H1 (cell line): ENCODE measurements at regions of chr17 and their contacts with region 1.

Region 1: GRCh38 chr17:79087428-79088143 is 13.0 kb downstream of the ENGASE start:
- DNase-seq: peak in 1 of 2 experiments; percentile 97
- H3K4me3 ChIP-seq: no peak overlapping the region
- H3K27ac ChIP-seq: no peak overlapping the region
- H3K4me1 ChIP-seq: no peaks in the 10 kb centered on the region
- H3K27me3 ChIP-seq: no peaks in the 10 kb centered on the region
- CTCF ChIP-seq: peak; percentile 91 to 98 (median 96)
- EP300 ChIP-seq: no peak
- POLR2A ChIP-seq: no peak
- RAD21 ChIP-seq: peak; percentile 89 to 93

Region 2: DNA sequence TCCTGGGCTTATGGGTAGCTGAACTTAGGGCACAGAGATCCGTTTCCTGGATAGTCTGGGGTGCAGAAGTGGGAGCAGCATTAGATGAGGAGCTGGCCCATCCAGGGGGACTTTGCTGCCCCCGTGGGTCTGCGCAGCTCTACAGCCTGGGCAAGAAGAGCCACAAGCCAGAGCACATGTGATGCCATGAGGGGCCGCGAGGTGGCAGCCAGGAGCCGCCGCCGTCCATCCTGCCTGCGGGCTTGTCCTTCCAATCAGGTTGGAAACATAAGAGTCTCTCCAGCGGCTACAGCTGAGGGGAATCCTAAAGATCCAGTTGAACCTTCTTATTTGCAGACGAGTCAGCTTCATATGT is 41.8 kb before region 1 on chr17:
- CTCF ChIA-PET with region 1: interaction called, 61 read pairs
- POLR2A ChIA-PET with region 1: no interaction called
- DNase-seq: peak; percentile 41 to 91
- H3K4me3 ChIP-seq: no peak overlapping the region
- H3K27ac ChIP-seq: no peak overlapping the region
- H3K4me1 ChIP-seq: no peaks in the 10 kb centered on the region
- H3K27me3 ChIP-seq: peaks cover 0 to 2% (median 0%) of the 10 kb centered on the region in 4 experiments; a peak in 4 of 7 replicates
- CTCF ChIP-seq: peak; percentile 95 to 96 (median 95)
- EP300 ChIP-seq: no peak
- POLR2A ChIP-seq: no peak
- RAD21 ChIP-seq: peak; percentile 76 to 82

Region 3: GRCh38 chr17:79074650-79075445 is 12.7 kb before region 1 on chr17 and contains the start of gene ENGASE:
- CTCF ChIA-PET with region 1: interaction called, 23 read pairs
- POLR2A ChIA-PET with region 1: interaction called, 4 read pairs
- DNase-seq: peak; percentile 75 to 91
- H3K4me3 ChIP-seq: peak within 1 kb of the TSS; percentile 41 to 85 (median 48)
- H3K27ac ChIP-seq: no peak within 1 kb of the TSS
- H3K4me1 ChIP-seq: no peaks in the 10 kb centered on the region
- H3K27me3 ChIP-seq: peaks cover 0 to 5% (median 0%) of the 10 kb centered on the region in 4 experiments; a peak in 4 of 7 replicates
- CTCF ChIP-seq: no peak
- EP300 ChIP-seq: peak in 1 of 2 experiments; percentile 26; a peak in 1 of 3 replicates
- POLR2A ChIP-seq: peak in 1 of 2 experiments; percentile 37; a peak in 1 of 3 replicates
- RAD21 ChIP-seq: no peak
- total RNA-seq, gene ENGASE: 30.6 and 36.1 TPM in 2 replicates

Region 4: GRCh38 chr17:79114458-79115301 is 27.1 kb after region 1 on chr17:
- CTCF ChIA-PET with region 1: interaction called, 26 read pairs
- POLR2A ChIA-PET with region 1: interaction called, 3 read pairs
- DNase-seq: no peak
- H3K4me3 ChIP-seq: no peak overlapping the region
- H3K27ac ChIP-seq: no peak overlapping the region
- H3K4me1 ChIP-seq: peaks cover 0 to 4% (median 3%) of the 10 kb centered on the region in 4 experiments; a peak in 4 of 7 replicates
- H3K27me3 ChIP-seq: no peaks in the 10 kb centered on the region
- CTCF ChIP-seq: no peak
- EP300 ChIP-seq: no peak
- POLR2A ChIP-seq: no peak
- RAD21 ChIP-seq: no peak

Region 5: DNA sequence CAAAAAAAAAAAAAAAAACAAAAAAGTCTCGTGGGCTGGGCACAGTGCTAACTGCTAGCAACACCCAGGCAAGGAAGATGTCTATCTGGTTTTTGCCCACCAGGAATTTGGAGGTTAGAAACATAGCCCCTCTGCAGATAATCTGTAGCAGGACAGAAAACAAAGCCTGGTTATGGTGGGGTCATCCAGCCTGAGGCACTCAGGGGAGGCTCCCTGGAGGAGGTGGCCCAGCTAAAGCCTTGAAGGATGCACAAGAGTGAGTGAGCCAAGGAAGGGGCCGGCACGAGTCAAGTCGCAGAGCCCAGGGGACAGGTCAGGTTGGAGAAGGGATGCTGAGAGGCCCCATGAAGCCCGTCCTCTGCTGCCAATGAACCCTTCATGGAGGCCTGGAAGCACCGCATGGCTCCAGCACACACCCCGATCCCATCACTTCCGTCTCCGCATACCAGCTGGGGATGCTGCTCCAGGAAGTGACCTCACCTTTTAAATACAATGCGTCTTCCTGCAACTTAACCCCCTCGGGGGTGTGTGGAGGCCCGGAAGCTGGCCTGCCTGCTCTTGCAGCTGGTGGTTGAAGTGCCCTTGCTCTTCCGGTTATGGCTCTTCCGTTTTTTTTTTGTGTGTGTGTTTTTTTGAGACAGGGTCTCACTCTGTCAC is 73.5 kb after region 1 on chr17:
- CTCF ChIA-PET with region 1: interaction called, 12 read pairs
- POLR2A ChIA-PET with region 1: no interaction called
- DNase-seq: no peak
- H3K4me3 ChIP-seq: no peak overlapping the region
- H3K27ac ChIP-seq: no peak overlapping the region
- H3K4me1 ChIP-seq: peaks cover 0 to 7% (median 1%) of the 10 kb centered on the region in 4 experiments; a peak in 3 of 7 replicates
- H3K27me3 ChIP-seq: no peaks in the 10 kb centered on the region
- CTCF ChIP-seq: no peak
- EP300 ChIP-seq: no peak
- POLR2A ChIP-seq: no peak
- RAD21 ChIP-seq: no peak

Region 6: GRCh38 chr17:79223953-79224352 is 136.4 kb after region 1 on chr17:
- CTCF ChIA-PET with region 1: no interaction called
- POLR2A ChIA-PET with region 1: no interaction called
- DNase-seq: no peak
- H3K4me3 ChIP-seq: no peak overlapping the region
- H3K27ac ChIP-seq: no peak overlapping the region
- H3K4me1 ChIP-seq: peaks cover 0 to 24% (median 17%) of the 10 kb centered on the region in 4 experiments; a peak in 5 of 7 replicates
- H3K27me3 ChIP-seq: no peaks in the 10 kb centered on the region; a peak in 1 of 7 replicates
- CTCF ChIP-seq: no peak
- EP300 ChIP-seq: no peak
- POLR2A ChIP-seq: no peak
- RAD21 ChIP-seq: no peak